ENCODE measurements at regions of chr11 and their contacts with region 1.

Region 1: GRCh38 chr11:45917623-45918330 is at the start of gene PEX16:
- DNase-seq: peak; percentile 99
- ATAC-seq: peak; percentile 83
- H3K4me3 ChIP-seq: peak within 1 kb of the TSS; percentile 86 to 99 (median 90)
- H3K4me3 Mint-ChIP-seq: peak within 1 kb of the TSS; percentile 92
- H3K27ac ChIP-seq: peak within 1 kb of the TSS; percentile 88 to 95
- H3K27ac Mint-ChIP-seq: peak within 1 kb of the TSS; percentile 94
- H3K4me1 ChIP-seq: peaks cover 44 to 57% of the 10 kb centered on the region in 2 donors
- H3K4me1 Mint-ChIP-seq: peaks cover 64% of the 10 kb centered on the region
- H3K27me3 ChIP-seq: no peaks in the 10 kb centered on the region
- H3K27me3 Mint-ChIP-seq: no peaks in the 10 kb centered on the region
- CTCF ChIP-seq: no peak
- total RNA-seq, gene PEX16: 107 and 113 TPM in 2 replicates

Region 2: DNA sequence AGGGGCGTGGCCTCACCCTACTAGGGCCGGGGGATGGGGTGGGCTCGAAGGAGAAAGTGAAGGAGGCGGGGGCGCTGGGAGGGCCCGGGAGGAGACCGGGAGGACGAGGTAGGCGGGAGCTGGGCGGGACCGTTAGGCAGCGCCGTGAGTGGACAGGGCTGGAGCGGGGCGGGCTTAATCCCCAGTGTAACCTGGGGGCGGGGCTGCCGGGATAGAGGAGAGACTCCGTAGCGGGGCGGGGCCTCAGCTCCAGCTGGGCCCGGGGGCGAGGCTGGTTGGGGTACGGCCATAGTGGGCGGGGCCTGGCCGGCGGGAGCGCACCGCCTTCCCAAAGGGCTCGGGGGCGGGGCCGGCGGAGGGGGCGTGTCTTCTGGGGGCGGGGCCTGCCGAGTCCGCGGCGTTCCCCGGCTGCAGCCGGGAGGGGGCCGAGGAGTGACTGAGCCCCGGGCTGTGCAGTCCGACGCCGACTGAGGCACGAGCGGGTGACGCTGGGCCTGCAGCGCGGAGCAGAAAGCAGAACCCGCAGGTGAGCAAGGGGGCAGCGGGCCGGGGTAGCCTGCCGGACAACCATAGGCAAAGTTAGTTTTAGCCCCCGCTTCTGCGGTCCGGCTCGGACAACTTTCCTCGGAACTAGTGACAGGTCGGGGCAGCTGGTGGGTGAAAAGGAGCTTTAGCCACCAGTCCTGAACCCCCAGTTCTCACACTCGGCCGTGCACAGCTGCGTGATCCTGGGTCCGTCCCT is 1352.4 kb before region 1 on chr11 and contains the start of gene CD82:
- CTCF ChIA-PET with region 1: no interaction called
- POLR2A ChIA-PET with region 1: no interaction called
- intact Hi-C with region 1: loop called (anchors 10 kb)
- DNase-seq: peak; percentile 97
- ATAC-seq: peak; percentile 86
- H3K4me3 ChIP-seq: peak within 1 kb of the TSS; percentile 58 to 99 (median 81)
- H3K4me3 Mint-ChIP-seq: peak within 1 kb of the TSS; percentile 92
- H3K27ac ChIP-seq: peak within 1 kb of the TSS; percentile 46 to 80
- H3K27ac Mint-ChIP-seq: peak within 1 kb of the TSS; percentile 88
- H3K4me1 ChIP-seq: peaks cover 58 to 77% of the 10 kb centered on the region in 2 donors
- H3K4me1 Mint-ChIP-seq: peaks cover 75% of the 10 kb centered on the region
- H3K27me3 ChIP-seq: no peaks in the 10 kb centered on the region
- H3K27me3 Mint-ChIP-seq: no peaks in the 10 kb centered on the region
- CTCF ChIP-seq: peak; percentile 47
- total RNA-seq, gene CD82: 438 and 451 TPM in 2 replicates

Region 3: GRCh38 chr11:45864041-45864440 is 53.7 kb before region 1 on chr11:
- CTCF ChIA-PET with region 1: no interaction called
- POLR2A ChIA-PET with region 1: no interaction called
- intact Hi-C with region 1: no loop called
- DNase-seq: no peak
- ATAC-seq: no peak
- H3K4me3 ChIP-seq: no peak overlapping the region
- H3K4me3 Mint-ChIP-seq: no peak overlapping the region
- H3K27ac ChIP-seq: no peak overlapping the region
- H3K27ac Mint-ChIP-seq: no peak overlapping the region
- H3K4me1 ChIP-seq: no peaks in the 10 kb centered on the region
- H3K4me1 Mint-ChIP-seq: no peaks in the 10 kb centered on the region
- H3K27me3 ChIP-seq: no peaks in the 10 kb centered on the region
- H3K27me3 Mint-ChIP-seq: no peaks in the 10 kb centered on the region
- CTCF ChIP-seq: no peak

Region 4: GRCh38 chr11:45885274-45885920 is 32.4 kb before region 1 on chr11 and contains the start of gene MAPK8IP1:
- CTCF ChIA-PET with region 1: no interaction called
- POLR2A ChIA-PET with region 1: no interaction called
- intact Hi-C with region 1: loop called (anchors 1 kb)
- DNase-seq: peak; percentile 77
- ATAC-seq: peak; percentile 91
- H3K4me3 ChIP-seq: peak within 1 kb of the TSS in 4 of 5 experiments; percentile 32 to 59 (median 50)
- H3K4me3 Mint-ChIP-seq: peak within 1 kb of the TSS; percentile 82
- H3K27ac ChIP-seq: no peak within 1 kb of the TSS
- H3K27ac Mint-ChIP-seq: peak within 1 kb of the TSS; percentile 77
- H3K4me1 ChIP-seq: peaks cover 11 to 12% of the 10 kb centered on the region in 2 donors
- H3K4me1 Mint-ChIP-seq: peaks cover 12% of the 10 kb centered on the region
- H3K27me3 ChIP-seq: peaks cover 0 to 13% (median 0%) of the 10 kb centered on the region in 4 experiments
- H3K27me3 Mint-ChIP-seq: no peaks in the 10 kb centered on the region
- CTCF ChIP-seq: no peak
- total RNA-seq, gene MAPK8IP1: 1.4 and 2.1 TPM in 2 replicates

Region 5: DNA sequence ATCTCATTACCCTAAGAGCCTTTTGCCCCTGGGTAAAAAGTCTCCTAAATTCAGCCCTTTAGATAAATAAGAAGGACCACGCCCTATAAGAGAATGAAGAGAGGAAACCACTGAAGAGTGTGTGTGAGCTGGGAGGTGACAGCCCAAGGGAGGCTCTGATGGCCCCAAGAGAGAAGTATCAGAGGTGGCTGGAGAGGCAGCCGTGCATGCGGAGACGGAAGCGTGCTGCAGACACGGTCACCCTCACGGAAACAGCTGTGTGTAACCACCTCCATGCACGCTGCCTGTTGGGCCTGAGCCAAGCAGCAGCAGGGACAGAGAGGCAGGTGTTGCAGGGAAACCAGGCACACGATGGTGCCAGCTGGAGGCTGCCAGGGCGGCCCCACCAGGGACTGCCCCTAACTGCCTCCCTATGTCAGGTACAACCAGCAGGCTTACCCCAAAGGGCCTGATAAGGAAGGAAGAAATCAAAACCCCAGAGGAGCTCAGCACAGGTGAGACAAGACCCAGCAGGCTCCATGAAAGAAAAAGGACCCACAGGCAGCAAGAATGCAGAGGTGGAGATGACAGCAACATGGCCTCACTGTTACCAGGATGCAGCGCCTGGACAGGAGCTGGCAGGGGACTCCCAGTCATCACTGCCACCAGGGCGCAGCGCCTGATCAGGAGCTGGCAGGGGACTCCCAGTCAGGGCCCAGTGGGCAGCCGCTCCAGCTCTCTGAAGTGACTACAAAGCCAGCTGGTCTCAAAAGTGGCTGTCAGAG is 12.4 kb after region 1 on chr11:
- CTCF ChIA-PET with region 1: interaction called, 98 read pairs
- POLR2A ChIA-PET with region 1: interaction called, 162 read pairs
- intact Hi-C with region 1: loop called (anchors 1 kb)
- DNase-seq: peak; percentile 94
- ATAC-seq: peak; percentile 77
- H3K4me3 ChIP-seq: peak overlapping the region; percentile 26 to 95 (median 79)
- H3K4me3 Mint-ChIP-seq: peak overlapping the region; percentile 95
- H3K27ac ChIP-seq: peak overlapping the region; percentile 92 to 93
- H3K27ac Mint-ChIP-seq: peak overlapping the region; percentile 92
- H3K4me1 ChIP-seq: peaks cover 65 to 84% of the 10 kb centered on the region in 2 donors
- H3K4me1 Mint-ChIP-seq: peaks cover 93% of the 10 kb centered on the region
- H3K27me3 ChIP-seq: no peaks in the 10 kb centered on the region
- H3K27me3 Mint-ChIP-seq: no peaks in the 10 kb centered on the region
- CTCF ChIP-seq: no peak

Region 6: GRCh38 chr11:46055371-46055770 is 137.6 kb after region 1 on chr11:
- CTCF ChIA-PET with region 1: no interaction called
- POLR2A ChIA-PET with region 1: no interaction called
- intact Hi-C with region 1: no loop called
- DNase-seq: no peak
- ATAC-seq: no peak
- H3K4me3 ChIP-seq: no peak overlapping the region
- H3K4me3 Mint-ChIP-seq: no peak overlapping the region
- H3K27ac ChIP-seq: no peak overlapping the region
- H3K27ac Mint-ChIP-seq: no peak overlapping the region
- H3K4me1 ChIP-seq: no peaks in the 10 kb centered on the region
- H3K4me1 Mint-ChIP-seq: no peaks in the 10 kb centered on the region
- H3K27me3 ChIP-seq: no peaks in the 10 kb centered on the region
- H3K27me3 Mint-ChIP-seq: no peaks in the 10 kb centered on the region
- CTCF ChIP-seq: no peak

Region 7: DNA sequence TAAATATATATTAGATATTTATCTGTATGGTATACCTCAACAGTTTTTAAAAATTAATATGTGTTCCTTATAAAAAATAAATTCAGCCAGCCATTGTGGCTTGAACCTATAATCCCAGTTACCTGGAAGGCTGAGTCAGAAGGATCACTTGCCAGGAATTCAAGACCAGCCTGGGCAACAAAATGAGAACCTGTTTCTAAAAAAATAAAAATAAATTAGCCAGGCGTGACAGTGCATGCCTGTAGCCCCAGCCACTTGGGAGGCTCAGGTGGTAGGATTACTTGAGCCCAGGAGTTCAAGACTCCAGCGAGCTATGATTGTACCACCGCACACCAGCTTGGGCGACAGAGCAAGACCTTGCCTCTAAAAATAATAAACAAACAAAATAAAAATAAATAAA is 148.6 kb after region 1 on chr11:
- CTCF ChIA-PET with region 1: no interaction called
- POLR2A ChIA-PET with region 1: no interaction called
- intact Hi-C with region 1: no loop called
- DNase-seq: no peak
- ATAC-seq: no peak
- H3K4me3 ChIP-seq: no peak overlapping the region
- H3K4me3 Mint-ChIP-seq: no peak overlapping the region
- H3K27ac ChIP-seq: no peak overlapping the region
- H3K27ac Mint-ChIP-seq: no peak overlapping the region
- H3K4me1 ChIP-seq: no peaks in the 10 kb centered on the region
- H3K4me1 Mint-ChIP-seq: no peaks in the 10 kb centered on the region
- H3K27me3 ChIP-seq: no peaks in the 10 kb centered on the region
- H3K27me3 Mint-ChIP-seq: no peaks in the 10 kb centered on the region
- CTCF ChIP-seq: no peak

Region 8: DNA sequence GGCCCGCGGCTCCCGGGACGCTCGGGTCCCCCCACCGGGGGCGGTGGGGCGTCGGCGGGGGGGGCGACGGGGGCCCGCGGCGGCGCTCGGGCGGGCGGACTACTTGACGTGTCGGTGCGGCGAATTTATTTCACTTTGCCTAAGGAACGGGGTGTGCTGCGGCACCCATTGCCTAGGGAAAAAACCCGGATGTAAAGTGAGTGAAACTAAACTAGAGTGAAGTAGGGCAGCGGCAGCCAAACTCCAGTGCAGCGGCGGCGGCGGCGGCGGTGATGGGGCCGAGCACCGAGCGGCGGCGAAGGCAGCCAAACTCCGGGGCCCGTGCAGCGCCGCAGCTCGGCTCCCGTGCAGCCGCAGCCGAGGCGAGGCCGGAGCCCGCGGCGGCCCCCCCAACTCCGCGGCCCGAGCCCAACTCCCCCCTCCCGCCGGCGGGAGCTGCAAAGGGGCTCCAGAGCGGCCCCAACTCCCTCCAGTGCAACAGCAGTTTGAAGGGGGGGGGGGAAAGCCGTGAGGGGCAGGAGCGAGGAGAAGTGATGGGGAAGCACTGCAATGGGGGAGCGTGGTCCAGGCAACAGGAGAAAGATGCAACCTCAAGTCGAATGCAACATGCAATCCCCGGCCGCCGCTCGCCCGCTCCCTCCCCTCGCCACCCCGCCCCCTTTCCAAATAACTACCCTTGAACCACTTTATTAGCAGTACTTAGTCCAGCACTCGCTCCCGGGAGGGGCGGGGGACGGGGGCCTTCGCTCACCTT is 204.1 kb after region 1 on chr11:
- CTCF ChIA-PET with region 1: no interaction called
- POLR2A ChIA-PET with region 1: no interaction called
- intact Hi-C with region 1: loop called (anchors 5 kb)
- DNase-seq: peak; percentile 91
- ATAC-seq: peak; percentile 47
- H3K4me3 ChIP-seq: peak overlapping the region; percentile 38 to 89 (median 78)
- H3K4me3 Mint-ChIP-seq: peak overlapping the region; percentile 93
- H3K27ac ChIP-seq: peak overlapping the region in 1 of 2 donors; percentile 61
- H3K27ac Mint-ChIP-seq: peak overlapping the region; percentile 97
- H3K4me1 ChIP-seq: peaks cover 21 to 22% of the 10 kb centered on the region in 2 donors
- H3K4me1 Mint-ChIP-seq: peaks cover 29% of the 10 kb centered on the region
- H3K27me3 ChIP-seq: no peaks in the 10 kb centered on the region
- H3K27me3 Mint-ChIP-seq: no peaks in the 10 kb centered on the region
- CTCF ChIP-seq: no peak

Region 9: GRCh38 chr11:46616998-46617675 is 699.4 kb after region 1 on chr11 and contains the starts of genes ATG13 and HARBI1:
- CTCF ChIA-PET with region 1: no interaction called
- POLR2A ChIA-PET with region 1: no interaction called
- intact Hi-C with region 1: loop called (anchors 5 kb)
- DNase-seq: peak; percentile 96
- ATAC-seq: peak; percentile 94
- H3K4me3 ChIP-seq: peak within 1 kb of the TSS; percentile 84 to 100 (median 100)
- H3K4me3 Mint-ChIP-seq: peak within 1 kb of the TSS; percentile 99
- H3K27ac ChIP-seq: peak within 1 kb of the TSS; percentile 99 to 100
- H3K27ac Mint-ChIP-seq: peak within 1 kb of the TSS; percentile 100
- H3K4me1 ChIP-seq: peaks cover 17 to 22% of the 10 kb centered on the region in 2 donors
- H3K4me1 Mint-ChIP-seq: peaks cover 30% of the 10 kb centered on the region
- H3K27me3 ChIP-seq: no peaks in the 10 kb centered on the region
- H3K27me3 Mint-ChIP-seq: no peaks in the 10 kb centered on the region
- CTCF ChIP-seq: no peak
- total RNA-seq, gene ATG13: 88.8 and 92.8 TPM in 2 replicates
- total RNA-seq, gene HARBI1: 6.7 and 8.0 TPM in 2 replicates